Endothelial cell of umbilical vein (primary cell): ENCODE measurements at regions of chr18 and their contacts with region 1.

Region 1: GRCh38 chr18:45839414-45840395 is 14.2 kb downstream of the SIGLEC15 start:
- DNase-seq: peak; percentile 70
- H3K4me3 ChIP-seq: no peak overlapping the region
- H3K27ac ChIP-seq: no peak overlapping the region
- H3K4me1 ChIP-seq: peaks cover 4% of the 10 kb centered on the region
- H3K27me3 ChIP-seq: peaks cover 24 to 38% of the 10 kb centered on the region in 2 experiments
- CTCF ChIP-seq: peak; percentile 63 to 79
- POLR2A ChIP-seq: no peak

Region 2: GRCh38 chr18:45480219-45481015 is 359.3 kb before region 1 on chr18:
- CTCF ChIA-PET with region 1: no interaction called
- POLR2A ChIA-PET with region 1: no interaction called
- dilution Hi-C with region 1: no loop called
- intact Hi-C with region 1: no loop called
- DNase-seq: no peak
- H3K4me3 ChIP-seq: no peak overlapping the region
- H3K27ac ChIP-seq: no peak overlapping the region
- H3K4me1 ChIP-seq: no peaks in the 10 kb centered on the region
- H3K27me3 ChIP-seq: no peaks in the 10 kb centered on the region
- CTCF ChIP-seq: no peak
- POLR2A ChIP-seq: no peak

Region 3: GRCh38 chr18:45690975-45691815 is 148.5 kb before region 1 on chr18:
- CTCF ChIA-PET with region 1: interaction called, 45 read pairs
- POLR2A ChIA-PET with region 1: no interaction called
- dilution Hi-C with region 1: no loop called
- intact Hi-C with region 1: loop called (anchors 1 kb)
- DNase-seq: peak; percentile 71
- H3K4me3 ChIP-seq: no peak overlapping the region
- H3K27ac ChIP-seq: no peak overlapping the region
- H3K4me1 ChIP-seq: no peaks in the 10 kb centered on the region
- H3K27me3 ChIP-seq: peaks cover 4% of the 10 kb centered on the region in 2 experiments
- CTCF ChIP-seq: peak; percentile 71 to 85
- POLR2A ChIP-seq: no peak

Region 4: DNA sequence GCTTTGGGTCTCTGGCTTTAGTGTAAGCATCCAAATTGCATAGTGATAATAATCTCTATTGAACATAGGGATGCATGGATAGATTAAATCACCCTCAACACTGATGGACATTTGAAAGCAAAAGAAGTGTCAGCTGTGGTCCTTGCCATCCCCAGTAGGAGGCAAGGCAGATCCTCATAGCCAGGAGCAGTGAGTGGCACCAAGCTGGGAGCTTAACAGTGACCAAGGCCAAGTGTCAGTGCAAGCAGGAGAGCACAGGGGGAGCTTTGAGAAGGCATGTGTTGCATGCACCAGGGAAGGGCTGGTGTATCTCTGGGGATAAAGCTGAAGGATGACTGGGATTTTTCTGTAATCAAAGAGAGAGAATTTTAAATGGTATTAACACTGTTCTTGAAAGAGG is 101.0 kb before region 1 on chr18:
- CTCF ChIA-PET with region 1: interaction called, 15 read pairs
- POLR2A ChIA-PET with region 1: no interaction called
- dilution Hi-C with region 1: no loop called
- intact Hi-C with region 1: no loop called
- DNase-seq: no peak
- H3K4me3 ChIP-seq: no peak overlapping the region
- H3K27ac ChIP-seq: no peak overlapping the region
- H3K4me1 ChIP-seq: no peaks in the 10 kb centered on the region
- H3K27me3 ChIP-seq: peaks cover 21 to 42% of the 10 kb centered on the region in 2 experiments
- CTCF ChIP-seq: no peak
- POLR2A ChIP-seq: no peak

Region 5: GRCh38 chr18:45764000-45764686 is 75.6 kb before region 1 on chr18:
- CTCF ChIA-PET with region 1: interaction called, 14 read pairs
- POLR2A ChIA-PET with region 1: no interaction called
- dilution Hi-C with region 1: no loop called
- intact Hi-C with region 1: no loop called
- DNase-seq: peak; percentile 80
- H3K4me3 ChIP-seq: no peak overlapping the region
- H3K27ac ChIP-seq: peak overlapping the region; percentile 80
- H3K4me1 ChIP-seq: peaks cover 27% of the 10 kb centered on the region
- H3K27me3 ChIP-seq: peaks cover 0 to 5% of the 10 kb centered on the region in 2 experiments
- CTCF ChIP-seq: no peak
- POLR2A ChIP-seq: peak; percentile 21

Region 6: GRCh38 chr18:45850021-45850420 is 10.3 kb after region 1 on chr18:
- CTCF ChIA-PET with region 1: interaction called, 14 read pairs
- POLR2A ChIA-PET with region 1: no interaction called
- dilution Hi-C with region 1: no loop called
- intact Hi-C with region 1: no loop called
- DNase-seq: no peak
- H3K4me3 ChIP-seq: no peak overlapping the region
- H3K27ac ChIP-seq: no peak overlapping the region
- H3K4me1 ChIP-seq: no peaks in the 10 kb centered on the region
- H3K27me3 ChIP-seq: no peaks in the 10 kb centered on the region
- CTCF ChIP-seq: peak; percentile 8 to 20
- POLR2A ChIP-seq: no peak